Esophagus muscularis mucosa (tissue), 4 donors: ENCODE measurements at regions of chr17 and their contacts with region 1.

Region 1: DNA sequence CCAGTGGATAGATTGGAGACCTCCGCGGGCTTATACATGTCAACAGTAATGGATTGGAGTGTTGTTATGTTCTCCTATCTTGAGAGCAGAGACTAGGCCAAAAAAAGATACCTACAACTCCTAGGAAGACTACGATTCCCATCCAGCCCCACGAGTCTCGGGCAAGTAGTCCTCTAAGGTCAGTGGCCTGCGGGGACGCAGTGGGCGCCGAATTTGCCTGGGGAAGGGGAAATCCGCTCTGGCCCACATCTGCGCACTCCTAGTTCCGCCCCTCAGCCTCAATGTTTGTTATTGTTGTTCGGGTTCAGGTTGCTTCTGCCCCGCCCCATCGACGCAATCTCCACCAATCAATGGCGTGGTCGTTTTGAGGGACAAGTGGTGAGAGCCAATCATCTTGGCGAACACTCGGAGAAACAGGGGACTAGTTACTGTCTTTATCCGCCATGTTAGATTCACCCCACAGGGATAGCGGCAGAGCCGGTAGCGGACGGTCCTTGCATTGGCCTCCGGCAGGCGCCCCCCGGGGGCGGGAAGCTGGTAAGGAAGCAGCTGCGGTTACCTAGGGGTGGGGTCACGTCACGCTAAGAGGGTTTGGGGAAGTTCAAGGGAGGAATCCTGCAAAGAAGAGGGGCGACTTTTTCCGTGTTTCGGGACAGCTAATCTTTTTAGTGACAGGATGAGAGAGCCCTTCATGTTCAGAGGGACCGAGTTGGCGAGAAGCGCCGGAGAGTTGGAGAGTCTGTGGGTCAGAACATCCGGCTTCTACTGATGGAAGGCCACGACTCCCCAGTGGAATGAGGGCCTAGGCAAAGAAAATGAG is at the start of gene NBR1:
- DNase-seq: peak; percentile 100
- H3K4me3 ChIP-seq: peak within 1 kb of the TSS; percentile 68 to 79 (median 76)
- H3K27ac ChIP-seq: peak within 1 kb of the TSS; percentile 97 to 98 (median 97)
- H3K4me1 ChIP-seq: peaks cover 50 to 62% (median 58%) of the 10 kb centered on the region in 4 donors
- H3K27me3 ChIP-seq: no peaks in the 10 kb centered on the region
- CTCF ChIP-seq: no peak
- EP300 ChIP-seq: no peak
- POLR2A ChIP-seq: peak; percentile 72
- total RNA-seq, gene NBR1: 83.3 to 156 (median 104) TPM

Region 2: GRCh38 chr17:43024407-43025289 is 146.3 kb before region 1 on chr17 and contains the start of gene RND2:
- intact Hi-C with region 1: loop called (anchors 5 kb)
- DNase-seq: peak; percentile 97
- H3K4me3 ChIP-seq: peak within 1 kb of the TSS; percentile 61 to 67 (median 63)
- H3K27ac ChIP-seq: peak within 1 kb of the TSS; percentile 81 to 87 (median 83)
- H3K4me1 ChIP-seq: peaks cover 18 to 43% (median 39%) of the 10 kb centered on the region in 4 donors
- H3K27me3 ChIP-seq: no peaks in the 10 kb centered on the region
- CTCF ChIP-seq: peak; percentile 72 to 86 (median 85)
- EP300 ChIP-seq: no peak
- POLR2A ChIP-seq: no peak
- total RNA-seq, gene RND2: 2.7 to 3.2 (median 2.8) TPM

Region 3: DNA sequence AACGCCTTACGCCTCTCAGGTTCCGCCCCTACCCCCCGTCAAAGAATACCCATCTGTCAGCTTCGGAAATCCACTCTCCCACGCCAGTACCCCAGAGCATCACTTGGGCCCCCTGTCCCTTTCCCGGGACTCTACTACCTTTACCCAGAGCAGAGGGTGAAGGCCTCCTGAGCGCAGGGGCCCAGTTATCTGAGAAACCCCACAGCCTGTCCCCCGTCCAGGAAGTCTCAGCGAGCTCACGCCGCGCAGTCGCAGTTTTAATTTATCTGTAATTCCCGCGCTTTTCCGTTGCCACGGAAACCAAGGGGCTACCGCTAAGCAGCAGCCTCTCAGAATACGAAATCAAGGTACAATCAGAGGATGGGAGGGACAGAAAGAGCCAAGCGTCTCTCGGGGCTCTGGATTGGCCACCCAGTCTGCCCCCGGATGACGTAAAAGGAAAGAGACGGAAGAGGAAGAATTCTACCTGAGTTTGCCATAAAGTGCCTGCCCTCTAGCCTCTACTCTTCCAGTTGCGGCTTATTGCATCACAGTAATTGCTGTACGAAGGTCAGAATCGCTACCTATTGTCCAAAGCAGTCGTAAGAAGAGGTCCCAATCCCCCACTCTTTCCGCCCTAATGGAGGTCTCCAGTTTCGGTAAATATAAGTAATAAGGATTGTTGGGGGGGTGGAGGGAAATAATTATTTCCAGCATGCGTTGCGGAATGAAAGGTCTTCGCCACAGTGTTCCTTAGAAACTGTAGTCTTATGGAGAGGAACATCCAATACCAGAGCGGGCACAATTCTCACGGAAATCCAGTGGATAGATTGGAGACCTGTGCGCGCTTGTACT is 45.6 kb before region 1 on chr17 and contains the start of gene BRCA1:
- intact Hi-C with region 1: loop called (anchors 5 kb)
- DNase-seq: peak; percentile 97
- H3K4me3 ChIP-seq: peak within 1 kb of the TSS; percentile 59 to 82 (median 68)
- H3K27ac ChIP-seq: peak within 1 kb of the TSS; percentile 68 to 89 (median 85)
- H3K4me1 ChIP-seq: peaks cover 14 to 44% (median 35%) of the 10 kb centered on the region in 4 donors
- H3K27me3 ChIP-seq: no peaks in the 10 kb centered on the region
- CTCF ChIP-seq: peak in 1 of 3 experiments; percentile 35
- EP300 ChIP-seq: no peak
- POLR2A ChIP-seq: no peak
- total RNA-seq, gene BRCA1: 3.1 to 7.6 (median 4.7) TPM

Region 4: GRCh38 chr17:43211480-43212402 is 40.8 kb after region 1 on chr17 and contains the start of gene TMEM106A:
- intact Hi-C with region 1: loop called (anchors 5 kb)
- DNase-seq: peak; percentile 96
- H3K4me3 ChIP-seq: peak within 1 kb of the TSS; percentile 59 to 74 (median 65)
- H3K27ac ChIP-seq: peak within 1 kb of the TSS; percentile 79 to 84 (median 80)
- H3K4me1 ChIP-seq: peaks cover 12 to 28% (median 26%) of the 10 kb centered on the region in 4 donors
- H3K27me3 ChIP-seq: no peaks in the 10 kb centered on the region
- CTCF ChIP-seq: peak in 2 of 3 experiments; percentile 34 to 39
- EP300 ChIP-seq: no peak
- POLR2A ChIP-seq: no peak
- total RNA-seq, gene TMEM106A: 3.3 to 6.2 (median 3.7) TPM